ENCODE measurements at regions of chr11 and their contacts with region 1.

Region 1: GRCh38 chr11:68839054-68839865 is 2.5 kb downstream of the CPT1A start:
- DNase-seq: peak; percentile 95 to 98
- H3K4me3 ChIP-seq: peak overlapping the region; percentile 45
- H3K4me3 Mint-ChIP-seq: peak overlapping the region; percentile 81
- H3K27ac Mint-ChIP-seq: peak overlapping the region; percentile 67
- H3K4me1 ChIP-seq: peaks cover 39% of the 10 kb centered on the region
- H3K4me1 Mint-ChIP-seq: peaks cover 14% of the 10 kb centered on the region
- H3K27me3 ChIP-seq: 0 out of 2 replicates have a peak, but pooled peaks cover 1% of the 10 kb centered on the region
- H3K27me3 Mint-ChIP-seq: peaks cover 5% of the 10 kb centered on the region
- CTCF ChIP-seq: no peak

Region 2: DNA sequence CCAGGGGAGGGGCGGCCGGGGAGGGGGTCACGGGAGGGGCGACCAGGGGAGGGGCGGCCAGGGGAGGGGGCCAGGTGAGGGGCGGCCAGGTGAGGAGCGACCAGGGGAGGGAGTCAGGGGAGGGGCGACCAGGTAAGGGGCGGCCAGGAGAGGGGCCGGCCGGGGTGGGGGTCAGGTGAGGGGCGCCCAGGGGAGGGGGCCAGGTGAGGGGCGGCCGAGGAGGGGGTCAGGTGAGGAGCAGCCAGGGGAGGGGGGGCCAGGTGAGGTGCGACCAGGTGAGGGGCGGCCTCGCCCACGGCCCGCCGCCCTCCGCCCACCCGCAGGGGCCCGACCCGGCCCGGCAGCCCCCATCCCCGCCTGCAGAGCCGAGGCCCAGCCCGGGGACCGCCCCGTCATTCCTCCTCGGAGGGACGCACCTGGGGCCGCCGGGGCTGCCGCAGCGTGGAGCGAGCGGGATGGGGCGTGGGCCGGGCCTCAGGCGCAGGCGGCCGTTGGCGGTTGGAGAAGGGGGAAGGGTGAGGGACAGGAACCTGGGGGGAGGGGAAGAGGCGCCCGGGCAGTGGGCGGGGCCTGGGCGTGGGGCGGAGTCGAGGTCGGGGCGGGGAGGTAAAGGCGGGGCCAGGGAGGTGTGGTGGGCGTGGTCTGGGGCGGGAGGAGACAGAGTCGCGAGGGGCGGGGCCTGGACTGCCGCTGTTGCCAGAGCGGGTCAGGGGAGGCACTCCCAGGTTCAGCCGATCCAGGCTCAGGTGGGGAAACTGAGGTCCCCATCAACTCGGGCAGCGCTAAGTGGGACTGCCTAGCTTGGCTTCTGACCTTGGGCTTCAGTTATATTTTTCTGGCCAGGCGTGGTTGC is 88.0 kb before region 1 on chr11 and contains the start of gene TESMIN:
- CTCF ChIA-PET with region 1: interaction called, 3 read pairs
- POLR2A ChIA-PET with region 1: no interaction called
- intact Hi-C with region 1: loop called (anchors 5 kb)
- DNase-seq: peak; percentile 97 to 99
- H3K4me3 ChIP-seq: peak within 1 kb of the TSS; percentile 67
- H3K4me3 Mint-ChIP-seq: peak within 1 kb of the TSS; percentile 72
- H3K27ac Mint-ChIP-seq: peak within 1 kb of the TSS; percentile 69
- H3K4me1 ChIP-seq: peaks cover 7% of the 10 kb centered on the region; the same call in 1 of the 2 replicates
- H3K4me1 Mint-ChIP-seq: peaks cover 25% of the 10 kb centered on the region
- H3K27me3 ChIP-seq: no peaks in the 10 kb centered on the region
- H3K27me3 Mint-ChIP-seq: peaks cover 5% of the 10 kb centered on the region
- CTCF ChIP-seq: no peak
- total RNA-seq, gene TESMIN: 22.1 and 26.2 TPM in 2 replicates

Region 3: GRCh38 chr11:68855205-68855981 is 16.1 kb after region 1 on chr11:
- CTCF ChIA-PET with region 1: interaction called, 4 read pairs
- POLR2A ChIA-PET with region 1: no interaction called
- intact Hi-C with region 1: loop called (anchors 1 kb)
- DNase-seq: no peak
- H3K4me3 ChIP-seq: no peak overlapping the region
- H3K4me3 Mint-ChIP-seq: no peak overlapping the region
- H3K27ac Mint-ChIP-seq: no peak overlapping the region
- H3K4me1 ChIP-seq: peaks cover 20% of the 10 kb centered on the region
- H3K4me1 Mint-ChIP-seq: peaks cover 13% of the 10 kb centered on the region
- H3K27me3 ChIP-seq: no peaks in the 10 kb centered on the region
- H3K27me3 Mint-ChIP-seq: no peaks in the 10 kb centered on the region
- CTCF ChIP-seq: no peak

Region 4: DNA sequence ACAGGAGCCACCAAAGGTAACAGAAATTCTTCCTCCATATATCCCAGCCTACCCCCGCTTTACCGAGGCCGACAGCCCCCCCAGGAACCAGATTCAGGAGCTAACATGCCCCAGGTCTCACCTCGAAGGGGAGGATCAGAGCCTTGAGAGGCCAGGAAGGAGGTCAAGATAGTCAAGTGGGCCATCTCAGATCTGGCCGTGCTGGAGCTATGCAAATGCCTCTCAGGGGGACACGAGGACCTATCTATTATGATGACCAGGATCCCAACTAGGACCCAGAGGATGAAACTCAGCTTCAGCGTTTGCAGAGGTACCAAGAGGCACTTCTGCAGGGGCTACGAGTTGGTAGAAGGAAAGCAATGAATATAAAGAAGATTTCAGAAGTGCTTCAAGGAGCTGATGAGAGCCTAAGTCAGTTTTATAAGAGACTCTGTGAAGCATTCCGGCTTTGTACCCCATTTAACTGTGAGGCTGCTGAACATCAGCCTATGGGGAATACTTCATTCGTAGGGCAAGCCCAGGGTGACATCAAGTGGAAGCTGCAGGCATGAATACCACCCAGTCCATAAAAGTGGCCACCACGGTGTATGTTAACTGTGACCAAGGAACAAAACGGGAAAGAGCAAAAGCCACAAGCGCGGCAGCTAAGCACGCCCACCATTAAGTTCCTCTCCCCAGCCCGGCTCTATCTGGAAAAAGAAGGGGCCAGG is 30.1 kb after region 1 on chr11:
- CTCF ChIA-PET with region 1: interaction called, 3 read pairs
- POLR2A ChIA-PET with region 1: no interaction called
- intact Hi-C with region 1: loop called (anchors 2 kb)
- DNase-seq: peak in 1 of 2 experiments; percentile 46
- H3K4me3 ChIP-seq: peak overlapping the region; percentile 43
- H3K4me3 Mint-ChIP-seq: peak overlapping the region; percentile 80
- H3K27ac Mint-ChIP-seq: peak overlapping the region; percentile 11
- H3K4me1 ChIP-seq: no peaks in the 10 kb centered on the region
- H3K4me1 Mint-ChIP-seq: peaks cover 17% of the 10 kb centered on the region
- H3K27me3 ChIP-seq: no peaks in the 10 kb centered on the region
- H3K27me3 Mint-ChIP-seq: no peaks in the 10 kb centered on the region
- CTCF ChIP-seq: peak in 1 of 2 experiments; percentile 38

Measured in Caco-2 (cell line).